GM12878 (cell line): ENCODE measurements at regions of chr20 and their contacts with region 1.

Region 1: DNA sequence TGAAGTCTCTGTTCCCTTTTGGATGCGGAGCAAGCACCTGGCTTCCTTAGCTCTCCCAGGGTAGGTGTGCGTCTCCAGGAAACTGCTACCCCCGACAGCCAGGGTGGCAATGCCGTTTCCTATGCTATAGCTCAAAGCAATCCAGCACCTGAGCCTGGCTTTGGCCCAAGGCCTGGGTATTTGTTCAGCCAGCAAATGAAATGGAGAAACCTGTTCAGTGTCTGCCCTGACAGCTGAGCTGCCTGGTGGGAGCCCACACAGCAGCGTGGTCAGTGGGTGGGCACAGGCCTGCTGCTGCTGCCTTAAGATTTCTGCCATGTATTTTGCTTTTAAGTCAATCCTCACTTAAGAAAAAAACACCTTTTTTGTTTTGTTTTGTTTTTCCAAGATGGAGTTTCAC is 13.7 kb downstream of the SPATA2 start:
- DNase-seq: no peak
- ATAC-seq: no peak
- H3K4me3 ChIP-seq: no peak overlapping the region
- H3K27ac ChIP-seq: no peak overlapping the region
- H3K4me1 ChIP-seq: no peaks in the 10 kb centered on the region
- H3K27me3 ChIP-seq: no peaks in the 10 kb centered on the region
- CTCF ChIP-seq: no peak
- EP300 ChIP-seq: no peak
- POLR2A ChIP-seq: no peak
- RAD21 ChIP-seq: no peak

Region 2: DNA sequence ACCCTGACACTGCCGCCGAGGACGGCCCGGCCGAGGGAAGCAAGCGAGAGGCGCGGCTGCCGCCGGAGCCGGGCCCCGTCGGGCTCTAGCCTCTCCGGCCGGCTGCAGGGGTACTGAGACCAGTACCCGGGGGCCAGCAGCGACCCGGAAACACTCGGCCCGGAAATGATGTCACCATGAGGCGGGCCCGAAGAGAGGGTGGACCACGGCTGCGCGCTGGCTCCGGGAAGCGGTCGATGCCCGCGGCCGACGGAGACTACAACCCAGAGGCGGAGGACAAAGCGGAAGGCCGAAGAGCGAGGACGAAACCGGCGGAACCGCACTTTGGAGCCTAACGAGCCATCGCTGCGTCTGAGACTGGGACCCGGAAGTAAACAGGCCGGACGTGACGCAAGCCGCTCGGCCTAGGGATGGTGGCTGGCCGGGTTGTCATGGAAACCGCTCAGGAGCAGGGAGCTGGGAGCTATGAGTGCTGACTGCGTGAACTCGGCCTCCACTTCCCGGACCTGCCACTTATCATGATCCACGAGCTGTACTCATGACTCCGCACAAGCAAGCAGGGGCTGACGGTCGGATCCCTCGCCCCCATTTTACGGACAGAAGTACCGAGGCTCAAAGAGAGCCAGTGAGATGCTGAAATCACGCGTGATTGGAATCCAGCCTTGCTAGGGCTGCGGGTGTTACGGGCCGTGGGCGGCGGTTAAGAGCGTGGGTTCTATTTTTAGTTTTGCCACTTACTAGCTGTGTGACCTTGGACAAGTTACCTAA is 14.0 kb after region 1 on chr20 and contains the start of gene SPATA2:
- CTCF ChIA-PET with region 1: interaction called, 20 read pairs
- POLR2A ChIA-PET with region 1: interaction called, 4 read pairs
- RAD21 ChIA-PET with region 1: no interaction called
- SMC1A ChIA-PET with region 1: no interaction called
- in situ Hi-C with region 1: no loop called
- intact Hi-C with region 1: no loop called
- DNase-seq: peak; percentile 79
- ATAC-seq: peak; percentile 92
- H3K4me3 ChIP-seq: peak within 1 kb of the TSS; percentile 94
- H3K27ac ChIP-seq: peak within 1 kb of the TSS; percentile 100
- H3K4me1 ChIP-seq: peaks cover 8% of the 10 kb centered on the region
- H3K27me3 ChIP-seq: no peaks in the 10 kb centered on the region
- CTCF ChIP-seq: no peak
- EP300 ChIP-seq: no peak
- POLR2A ChIP-seq: peak; percentile 83
- RAD21 ChIP-seq: no peak
- polyA plus RNA-seq, gene SPATA2: 0.93 to 1.3 TPM